ENCODE measurements at regions of chr2 and their contacts with region 1.

Region 1: DNA sequence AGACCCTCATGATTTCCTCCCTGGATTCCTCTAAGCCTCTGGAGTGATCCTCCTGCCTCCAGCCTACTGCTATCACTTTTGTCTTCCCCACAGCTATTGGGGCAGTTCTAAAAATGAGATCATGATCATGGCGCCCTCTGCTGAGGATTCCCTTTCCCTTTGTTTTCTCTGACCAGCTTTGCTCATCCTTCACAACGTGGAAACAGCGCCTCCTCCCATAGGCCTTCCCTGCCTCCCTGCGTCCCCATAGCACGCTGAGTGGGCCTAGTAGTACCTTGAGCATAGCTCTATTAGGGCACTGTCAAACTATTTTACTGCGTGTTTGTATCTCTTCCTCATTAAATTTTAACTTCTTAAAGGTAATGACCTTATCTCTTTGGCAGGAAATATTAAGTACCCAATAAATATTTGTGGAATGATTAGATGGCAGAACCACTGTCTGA is 207.0 kb upstream of the FANCL start:
- DNase-seq: peak; percentile 41
- H3K4me3 ChIP-seq: no peak overlapping the region
- H3K27ac ChIP-seq: no peak overlapping the region
- H3K27me3 ChIP-seq: no peaks in the 10 kb centered on the region
- CTCF ChIP-seq: peak; percentile 72

Region 2: DNA sequence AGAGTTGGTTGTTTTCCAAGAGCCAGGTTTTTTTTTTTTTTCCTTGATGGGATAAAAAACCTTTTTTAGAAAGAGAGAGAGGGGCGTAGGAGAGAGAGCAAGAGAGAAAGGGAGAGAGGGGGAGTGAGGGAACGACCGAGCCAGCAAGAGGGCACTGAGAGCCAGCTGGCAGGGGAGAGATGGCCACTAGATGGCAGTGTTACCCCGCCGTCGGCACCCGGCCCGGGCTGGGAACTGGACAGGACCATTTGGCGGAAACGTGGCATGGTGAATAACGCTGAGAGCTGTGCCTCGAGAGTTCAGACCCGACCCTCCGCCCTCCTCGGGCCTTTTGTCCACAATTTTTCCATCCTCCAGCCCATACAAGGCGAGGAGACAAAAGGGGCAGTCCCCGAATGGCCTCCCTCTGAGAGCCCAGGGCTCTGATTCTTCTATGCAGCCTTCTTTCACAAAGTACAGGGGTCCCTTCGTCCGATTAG is 688.2 kb before region 1 on chr2:
- CTCF ChIA-PET with region 1: interaction called, 34 read pairs
- POLR2A ChIA-PET with region 1: no interaction called
- DNase-seq: peak; percentile 55
- H3K4me3 ChIP-seq: peak overlapping the region; percentile 48
- H3K27ac ChIP-seq: no peak overlapping the region
- H3K27me3 ChIP-seq: no peaks in the 10 kb centered on the region
- CTCF ChIP-seq: peak; percentile 97

Region 3: DNA sequence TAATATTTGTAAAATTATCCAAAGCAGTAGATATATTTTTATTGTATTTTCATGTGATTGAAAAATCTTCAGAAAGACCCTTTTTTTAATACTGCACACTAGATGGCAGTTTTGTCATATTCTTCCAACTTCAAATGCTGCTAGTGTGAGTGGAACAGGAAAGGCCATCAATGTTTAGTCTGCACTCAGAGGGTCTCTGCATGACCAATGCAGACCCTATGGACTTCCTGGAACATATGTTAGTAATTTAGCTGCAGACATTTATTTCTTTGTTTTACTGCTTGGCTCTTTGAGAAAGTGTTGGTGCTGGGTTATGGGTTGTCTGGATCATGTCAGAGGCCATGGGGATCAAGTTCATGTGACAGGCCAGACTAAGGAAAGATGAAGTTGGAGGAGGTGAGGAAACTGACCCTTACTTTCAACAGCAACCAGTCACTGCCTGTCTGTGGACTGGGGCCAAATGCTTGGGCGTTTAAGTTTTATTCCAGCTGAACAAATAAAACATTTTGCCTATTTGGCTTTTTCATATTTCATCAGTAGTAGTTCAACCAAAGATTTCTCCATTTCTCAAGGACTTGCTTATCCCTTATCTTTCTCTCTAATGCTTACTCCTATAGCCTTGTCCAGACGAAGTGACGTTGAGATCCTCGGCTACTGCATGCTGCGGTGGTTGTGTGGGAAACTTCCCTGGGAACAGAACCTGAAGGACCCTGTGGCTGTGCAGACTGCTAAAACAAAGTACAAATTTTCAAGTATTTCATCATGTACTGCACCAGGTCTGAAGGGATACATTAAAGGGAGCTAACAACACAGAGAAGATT is 316.7 kb before region 1 on chr2:
- CTCF ChIA-PET with region 1: interaction called, 12 read pairs
- POLR2A ChIA-PET with region 1: no interaction called
- DNase-seq: no peak
- H3K4me3 ChIP-seq: no peak overlapping the region
- H3K27ac ChIP-seq: no peak overlapping the region
- H3K27me3 ChIP-seq: no peaks in the 10 kb centered on the region
- CTCF ChIP-seq: peak; percentile 36; the same call in 1 of the 2 replicates

Region 4: GRCh38 chr2:58466804-58467203 is 18.7 kb after region 1 on chr2:
- CTCF ChIA-PET with region 1: interaction called, 10 read pairs
- POLR2A ChIA-PET with region 1: no interaction called
- DNase-seq: no peak
- H3K4me3 ChIP-seq: no peak overlapping the region
- H3K27ac ChIP-seq: no peak overlapping the region
- H3K27me3 ChIP-seq: no peaks in the 10 kb centered on the region
- CTCF ChIP-seq: no peak

Measured in AG04450 (cell line).